ENCODE measurements at regions of chr18 and their contacts with region 1.

Region 1: DNA sequence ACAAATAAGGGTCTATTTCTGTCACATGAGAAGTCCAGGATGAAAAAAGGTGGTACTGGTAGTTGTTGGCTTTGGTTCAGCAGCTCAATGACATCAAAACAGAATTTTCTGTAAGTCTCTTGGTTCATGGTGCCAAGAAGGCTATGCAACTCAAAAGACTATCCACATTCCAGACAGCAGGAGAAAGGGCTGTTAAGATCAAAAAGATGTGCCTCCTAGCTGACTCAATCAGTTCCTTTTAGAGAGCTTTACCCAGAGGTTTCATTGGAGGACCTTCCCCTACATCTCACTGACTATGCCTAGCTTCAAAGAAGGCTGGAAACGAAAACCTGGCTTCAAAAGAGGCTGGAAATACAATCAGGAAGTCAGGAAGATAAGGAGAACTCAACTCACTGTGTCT is 98.0 kb downstream of the DYM start:
- DNase-seq: no peak
- H3K4me3 ChIP-seq: no peak overlapping the region
- H3K27ac ChIP-seq: no peak overlapping the region
- H3K4me1 ChIP-seq: no peaks in the 10 kb centered on the region
- H3K27me3 ChIP-seq: no peaks in the 10 kb centered on the region
- CTCF ChIP-seq: no peak

Region 2: DNA sequence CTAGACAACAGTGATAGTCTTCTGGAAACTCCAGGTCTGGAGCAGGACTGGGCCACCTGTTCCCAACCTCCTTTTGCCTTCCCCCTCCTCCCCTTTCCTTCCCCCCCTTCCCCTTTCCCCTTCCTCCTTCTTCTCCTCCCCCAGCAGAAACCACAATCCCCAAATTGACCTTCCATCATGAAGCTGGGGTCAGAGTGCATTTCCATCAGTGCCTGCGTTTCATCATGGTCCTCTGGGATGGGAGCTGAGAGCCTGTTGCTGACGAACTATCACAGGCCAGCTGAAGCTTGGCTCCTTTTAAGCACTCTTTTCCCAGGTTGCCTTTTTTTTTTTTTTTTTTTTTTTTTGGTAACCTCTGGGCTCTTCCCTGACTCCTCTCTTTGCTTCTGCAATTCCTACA is 1379.4 kb before region 1 on chr18:
- CTCF ChIA-PET with region 1: no interaction called
- POLR2A ChIA-PET with region 1: interaction called, 14 read pairs
- intact Hi-C with region 1: no loop called
- DNase-seq: no peak
- H3K4me3 ChIP-seq: no peak overlapping the region
- H3K27ac ChIP-seq: no peak overlapping the region
- H3K4me1 ChIP-seq: peaks cover 6% of the 10 kb centered on the region; the same call in 1 of the 2 replicates
- H3K27me3 ChIP-seq: no peaks in the 10 kb centered on the region
- CTCF ChIP-seq: no peak

Region 3: GRCh38 chr18:48124857-48125626 is 1237.4 kb before region 1 on chr18:
- CTCF ChIA-PET with region 1: no interaction called
- POLR2A ChIA-PET with region 1: no interaction called
- intact Hi-C with region 1: no loop called
- DNase-seq: no peak
- H3K4me3 ChIP-seq: no peak overlapping the region
- H3K27ac ChIP-seq: no peak overlapping the region
- H3K4me1 ChIP-seq: no peaks in the 10 kb centered on the region
- H3K27me3 ChIP-seq: peaks cover 14% of the 10 kb centered on the region
- CTCF ChIP-seq: no peak

Measured in PC-9 (cell line).